Cardiac septum (tissue), 1 donor: ENCODE measurements at regions of chr1 and their contacts with region 1.

Region 1: GRCh38 chr1:230772457-230773395 is 25.5 kb downstream of the CAPN9 start:
- DNase-seq: no peak

Region 2: DNA sequence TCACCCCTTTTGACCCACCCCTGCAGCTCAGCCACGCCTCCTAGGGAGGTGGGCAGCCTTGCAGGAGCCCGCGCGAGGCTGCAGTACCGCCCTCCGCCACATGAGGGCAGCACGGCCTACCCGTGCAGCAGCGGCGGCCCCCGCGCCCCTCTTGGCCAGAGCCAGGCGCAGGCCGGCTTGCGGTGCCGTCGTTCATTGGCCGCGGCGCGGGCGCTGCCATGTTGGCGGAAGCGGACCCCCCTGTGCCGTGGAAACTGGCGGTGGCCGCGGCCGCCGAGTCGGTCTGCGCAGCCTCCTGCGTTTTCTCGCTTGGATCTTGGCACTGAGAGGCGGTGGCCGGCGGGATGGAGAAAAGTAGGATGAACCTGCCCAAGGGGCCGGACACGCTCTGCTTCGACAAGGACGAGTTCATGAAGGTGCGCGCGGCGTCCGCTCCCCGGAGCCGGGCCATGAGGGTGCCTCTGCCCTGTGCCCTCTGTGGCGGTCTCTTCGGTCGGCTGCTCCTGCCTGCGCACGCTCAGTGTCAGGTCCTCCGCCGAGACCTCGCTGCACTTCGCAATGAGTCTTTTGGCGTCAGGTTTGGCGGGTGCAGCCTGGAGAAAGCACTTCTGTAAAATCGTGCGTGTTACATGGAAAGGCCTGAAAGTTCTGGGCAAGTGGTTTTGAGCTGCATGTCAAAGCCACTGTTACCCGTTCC is 130.3 kb before region 1 on chr1 and contains the start of gene COG2:
- intact Hi-C with region 1: loop called (anchors 1 kb)
- DNase-seq: peak; percentile 96
- total RNA-seq, gene COG2: 19.4 TPM

Region 3: GRCh38 chr1:230713915-230714764 is 58.6 kb before region 1 on chr1 and contains the start of gene AGT:
- intact Hi-C with region 1: loop called (anchors 5 kb)
- DNase-seq: peak; percentile 90
- total RNA-seq, gene AGT: 71.0 TPM

Region 4: GRCh38 chr1:230753586-230754251 is 19.0 kb before region 1 on chr1:
- intact Hi-C with region 1: loop called (anchors 2 kb)
- DNase-seq: no peak

Region 5: GRCh38 chr1:231134624-231135023 is 361.9 kb after region 1 on chr1:
- intact Hi-C with region 1: no loop called
- DNase-seq: no peak